Heart left ventricle (tissue), 16 donors: ENCODE measurements at regions of chr1 and their contacts with region 1.

Region 1: GRCh38 chr1:16146279-16147155 is 9.4 kb downstream of the EPHA2 start:
- DNase-seq: peak; percentile 88 to 91 (median 89)
- ATAC-seq: peak; percentile 47 to 73 (median 62)
- H3K4me3 ChIP-seq: peak overlapping the region in 11 of 12 donors; percentile 1 to 52 (median 36)
- H3K27ac ChIP-seq: peak overlapping the region; percentile 85 to 99 (median 93)
- H3K4me1 ChIP-seq: peaks cover 27 to 89% (median 77%) of the 10 kb centered on the region in 12 donors
- H3K27me3 ChIP-seq: no peaks in the 10 kb centered on the region
- CTCF ChIP-seq: peak in 1 of 12 donors; percentile 15
- POLR2A ChIP-seq: peak in 1 of 2 donors; percentile 60

Region 2: DNA sequence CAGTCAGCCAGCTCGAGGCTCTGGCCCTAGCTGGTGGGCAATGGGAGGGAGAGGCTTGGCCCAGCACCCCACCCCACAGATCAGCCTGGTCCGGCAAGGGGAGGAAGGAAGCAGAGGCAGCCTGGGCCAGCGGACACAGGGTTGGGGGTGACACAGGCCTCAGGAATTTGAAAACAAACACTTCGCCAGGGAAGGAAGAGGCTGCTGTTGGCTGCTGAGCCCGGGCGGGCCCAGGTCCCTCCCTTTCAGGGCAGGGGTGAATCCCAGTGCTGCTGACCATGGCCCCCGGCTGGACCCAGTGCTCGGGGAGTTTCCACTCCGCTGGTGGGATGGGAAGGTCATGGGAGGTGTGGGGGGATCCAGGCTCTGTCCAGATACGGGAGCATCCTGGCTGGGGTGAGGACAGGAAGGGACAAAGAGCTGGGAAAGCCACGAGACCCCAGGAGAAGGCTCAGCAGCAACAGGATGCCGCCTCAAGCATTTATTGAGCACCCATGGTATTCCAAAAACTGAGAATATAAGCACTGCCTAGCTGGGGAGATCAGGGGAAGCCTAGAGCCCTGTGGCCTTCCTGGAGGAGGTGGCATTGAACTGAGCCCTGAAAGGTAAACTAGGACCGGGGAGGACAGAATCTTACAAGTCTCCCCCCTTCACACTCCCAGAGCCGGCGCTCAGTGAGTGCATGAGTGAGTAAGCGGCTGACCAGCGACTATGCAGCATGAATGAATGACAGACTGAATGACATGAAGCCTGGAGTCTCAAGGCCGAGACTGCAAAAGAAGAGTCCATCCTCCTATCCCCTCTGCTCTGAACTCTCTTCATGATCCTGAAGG is 35.6 kb after region 1 on chr1:
- intact Hi-C with region 1: loop called in 3 of 10 experiments (anchors 5 kb)
- DNase-seq: peak; percentile 88 to 91 (median 90)
- ATAC-seq: peak; percentile 87 to 98 (median 94)
- H3K4me3 ChIP-seq: peak overlapping the region in 1 of 12 donors; percentile 22
- H3K27ac ChIP-seq: peak overlapping the region; percentile 78 to 98 (median 88)
- H3K4me1 ChIP-seq: peaks cover under 1 to 30% (median 20%) of the 10 kb centered on the region in 12 donors
- H3K27me3 ChIP-seq: no peaks in the 10 kb centered on the region
- CTCF ChIP-seq: no peak
- POLR2A ChIP-seq: peak in 1 of 2 donors; percentile 38